Activated CD8-positive, alpha-beta memory T cell treated with anti-CD3 and anti-CD28 coated beads, Interleukin-2, amount 10 ng/mL, durations not matched to agents 7 days and 5 days (primary cell): ENCODE measurements at regions of chr2 and their contacts with region 1.

Region 1: DNA sequence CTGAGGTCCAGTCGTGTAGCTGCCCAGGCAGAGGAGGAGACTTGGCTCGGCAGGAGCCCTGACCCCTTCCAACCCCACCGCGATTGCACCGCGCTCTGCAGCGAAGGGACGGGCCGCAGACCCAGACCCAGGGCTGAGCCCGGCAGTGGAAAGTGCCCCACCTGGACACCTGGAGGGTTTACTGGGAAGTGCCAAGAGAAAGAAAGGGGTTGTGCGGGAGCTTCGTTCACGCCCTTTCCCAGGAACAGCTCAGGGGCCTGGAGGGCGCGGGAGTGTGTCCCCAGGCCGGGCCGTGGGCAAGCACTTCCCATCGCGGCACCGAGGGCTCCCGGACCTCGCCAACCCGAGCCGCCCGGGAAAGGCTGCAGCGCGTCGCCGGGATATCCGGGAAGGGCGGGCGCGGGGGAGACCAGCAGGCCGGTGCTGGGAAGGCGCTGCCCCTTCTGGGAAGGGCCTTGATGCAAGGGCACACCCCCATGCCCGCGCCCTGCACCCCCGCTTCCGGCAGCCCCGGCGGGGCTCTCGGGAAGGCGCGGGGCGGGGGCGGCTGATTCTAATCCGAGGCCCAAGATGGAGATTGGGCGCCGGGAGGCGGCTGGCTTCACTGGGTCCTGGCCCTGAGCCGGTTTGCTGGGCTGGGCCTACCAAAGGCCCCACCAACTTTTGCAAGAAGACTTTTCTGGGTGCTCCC is 36.1 kb upstream of the MRPL33 start:
- DNase-seq: peak; percentile 64
- ATAC-seq: peak; percentile 86
- H3K4me3 Mint-ChIP-seq: peak overlapping the region; percentile 37
- H3K27ac Mint-ChIP-seq: no peak overlapping the region
- H3K4me1 Mint-ChIP-seq: peaks cover 7% of the 10 kb centered on the region
- H3K27me3 Mint-ChIP-seq: no peaks in the 10 kb centered on the region

Region 2: GRCh38 chr2:27723372-27724144 is 11.8 kb before region 1 on chr2:
- CTCF ChIA-PET with region 1: interaction called, 14 read pairs
- DNase-seq: no peak
- ATAC-seq: no peak
- H3K4me3 Mint-ChIP-seq: no peak overlapping the region
- H3K27ac Mint-ChIP-seq: no peak overlapping the region
- H3K4me1 Mint-ChIP-seq: peaks cover 28% of the 10 kb centered on the region
- H3K27me3 Mint-ChIP-seq: no peaks in the 10 kb centered on the region